Activated naive CD4-positive, alpha-beta T cell treated with anti-CD3 and anti-CD28 coated beads for 36 hours (primary cell): ENCODE measurements at regions of chr1 and their contacts with region 1.

Region 1: GRCh38 chr1:148318123-148318903 is 164.8 kb downstream of the PPIAL4G start:
- DNase-seq: peak; percentile 86
- H3K4me3 Mint-ChIP-seq: peak overlapping the region; percentile 77
- H3K27ac Mint-ChIP-seq: peak overlapping the region; percentile 79
- H3K4me1 Mint-ChIP-seq: peaks cover 34% of the 10 kb centered on the region
- H3K27me3 Mint-ChIP-seq: peaks cover 2% of the 10 kb centered on the region

Region 2: DNA sequence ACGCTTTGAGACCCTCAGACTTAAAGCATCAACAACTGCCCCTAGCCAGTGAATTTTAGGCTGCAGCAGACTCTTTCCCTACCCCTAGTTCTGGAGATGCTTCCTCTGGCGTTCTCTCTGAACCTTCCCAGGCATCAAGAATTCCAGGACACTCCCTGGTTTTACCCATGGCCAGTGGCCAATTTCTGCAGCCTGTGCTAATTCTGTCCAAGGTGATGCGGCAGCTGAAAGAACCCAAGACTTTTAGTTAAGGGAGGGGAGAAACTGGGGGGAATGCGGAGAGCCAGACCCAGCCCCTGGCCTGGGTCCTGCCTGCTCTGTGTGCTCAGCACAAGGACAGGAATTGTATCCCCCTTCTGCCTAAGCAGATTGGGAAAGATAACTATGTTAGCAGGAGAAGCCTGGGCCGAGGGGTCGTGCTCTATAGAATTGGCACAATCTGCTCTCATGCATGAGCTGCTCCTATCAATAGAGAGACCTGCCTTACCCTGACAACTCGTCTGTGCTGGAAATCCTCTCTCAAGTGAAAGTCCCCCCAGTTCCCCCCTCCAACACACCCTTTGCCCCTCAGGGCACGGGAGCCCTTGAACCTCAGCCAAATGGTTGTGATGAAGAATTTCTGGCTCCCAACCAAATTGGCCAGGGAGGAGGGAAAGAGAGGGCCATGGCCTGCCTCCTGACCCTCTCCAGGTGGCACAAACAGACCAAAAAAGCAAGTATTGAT is 421.1 kb before region 1 on chr1:
- CTCF ChIA-PET with region 1: no interaction called
- intact Hi-C with region 1: no loop called
- DNase-seq: no peak
- H3K4me3 Mint-ChIP-seq: no peak overlapping the region
- H3K27ac Mint-ChIP-seq: no peak overlapping the region
- H3K4me1 Mint-ChIP-seq: no peaks in the 10 kb centered on the region
- H3K27me3 Mint-ChIP-seq: no peaks in the 10 kb centered on the region

Region 3: DNA sequence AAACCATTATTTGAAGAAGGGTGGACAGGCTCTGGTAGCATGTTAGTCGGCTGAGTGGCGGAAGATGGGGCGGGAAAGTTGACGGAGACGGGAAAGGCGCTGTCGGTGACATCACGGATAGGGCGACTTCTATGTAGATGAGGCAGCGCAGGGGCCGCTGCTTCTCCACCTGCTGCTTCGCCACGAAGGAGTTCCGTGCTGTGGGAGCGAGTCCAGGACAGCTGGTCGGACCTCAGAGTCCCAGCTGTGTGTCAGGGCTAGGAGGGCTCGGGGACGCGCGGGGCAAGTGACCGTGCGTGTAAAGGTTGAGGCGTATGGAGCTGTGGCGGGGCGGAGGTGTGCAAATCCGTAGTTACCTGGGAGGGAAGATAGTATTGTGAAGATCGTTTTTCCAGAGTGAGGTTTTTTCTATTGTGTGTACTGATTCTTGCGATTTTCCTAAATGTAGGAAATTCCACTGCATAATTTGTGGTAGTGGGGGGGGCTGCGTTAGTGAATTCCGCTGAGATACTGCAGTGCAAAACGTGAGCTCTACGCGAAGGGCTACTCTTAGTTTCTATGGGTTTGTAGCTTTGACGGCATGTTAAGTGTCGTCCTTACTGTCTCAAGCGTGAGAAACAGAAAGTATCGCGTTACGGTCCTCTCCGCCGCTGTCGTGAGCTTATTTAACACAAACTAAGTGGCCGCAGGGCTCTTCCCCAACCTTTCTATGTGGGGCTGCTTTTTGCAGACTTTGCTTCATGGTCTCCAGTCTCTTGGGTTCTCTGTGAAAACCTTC is 55.0 kb before region 1 on chr1:
- CTCF ChIA-PET with region 1: no interaction called
- intact Hi-C with region 1: loop called (anchors 5 kb)
- DNase-seq: peak; percentile 89
- H3K4me3 Mint-ChIP-seq: peak overlapping the region; percentile 84
- H3K27ac Mint-ChIP-seq: peak overlapping the region; percentile 98
- H3K4me1 Mint-ChIP-seq: peaks cover 14% of the 10 kb centered on the region
- H3K27me3 Mint-ChIP-seq: peaks cover 3% of the 10 kb centered on the region

Region 4: GRCh38 chr1:148289647-148290046 is 28.7 kb before region 1 on chr1:
- CTCF ChIA-PET with region 1: no interaction called
- intact Hi-C with region 1: loop called (anchors 5 kb)
- DNase-seq: no peak
- H3K4me3 Mint-ChIP-seq: no peak overlapping the region
- H3K27ac Mint-ChIP-seq: no peak overlapping the region
- H3K4me1 Mint-ChIP-seq: peaks cover 5% of the 10 kb centered on the region
- H3K27me3 Mint-ChIP-seq: peaks cover 2% of the 10 kb centered on the region